Activated CD4-positive, alpha-beta T cell treated with anti-CD3 and anti-CD28 coated beads, Interleukin-2, amount 10 ng/mL, durations not matched to agents 7 days and 5 days (primary cell): ENCODE measurements at regions of chr13 and their contacts with region 1.

Region 1: DNA sequence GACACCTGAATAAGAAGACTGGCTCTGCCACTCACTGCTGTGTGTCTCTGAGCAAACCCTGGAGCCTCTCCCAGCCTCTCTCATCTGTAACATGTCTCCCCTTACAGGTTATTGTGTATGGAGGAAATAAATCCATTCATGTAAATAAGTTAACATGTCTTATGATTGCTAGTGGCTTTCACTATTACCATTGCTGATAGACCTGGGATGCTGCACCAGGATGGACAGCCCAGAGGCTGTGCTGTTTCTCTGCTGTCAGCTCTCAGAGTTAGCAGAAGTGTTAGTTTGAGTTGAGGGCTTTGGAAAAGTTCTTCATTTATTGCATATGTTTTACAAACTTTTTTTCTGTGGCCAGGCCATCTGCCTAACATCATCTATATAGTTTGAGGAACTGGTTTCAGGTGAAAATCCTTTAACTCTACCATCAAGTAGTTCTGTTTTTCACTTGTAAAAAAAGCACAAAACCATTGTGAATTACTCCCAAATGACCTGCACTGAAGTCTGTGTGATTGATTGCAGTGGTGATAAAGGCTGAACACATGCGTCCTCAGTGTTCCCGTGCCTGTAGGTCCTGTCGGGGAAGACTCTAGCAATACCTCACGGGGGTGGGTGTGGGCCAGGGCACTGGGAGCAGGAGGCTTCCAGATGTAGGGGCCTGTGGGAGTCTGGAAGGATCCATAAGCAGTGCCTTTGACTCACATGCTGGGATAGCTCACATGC is 24.6 kb downstream of the MPHOSPH8 start:
- DNase-seq: no peak
- H3K4me3 Mint-ChIP-seq: no peak overlapping the region
- H3K27ac Mint-ChIP-seq: no peak overlapping the region
- H3K4me1 Mint-ChIP-seq: no peaks in the 10 kb centered on the region
- H3K27me3 Mint-ChIP-seq: no peaks in the 10 kb centered on the region

Region 2: DNA sequence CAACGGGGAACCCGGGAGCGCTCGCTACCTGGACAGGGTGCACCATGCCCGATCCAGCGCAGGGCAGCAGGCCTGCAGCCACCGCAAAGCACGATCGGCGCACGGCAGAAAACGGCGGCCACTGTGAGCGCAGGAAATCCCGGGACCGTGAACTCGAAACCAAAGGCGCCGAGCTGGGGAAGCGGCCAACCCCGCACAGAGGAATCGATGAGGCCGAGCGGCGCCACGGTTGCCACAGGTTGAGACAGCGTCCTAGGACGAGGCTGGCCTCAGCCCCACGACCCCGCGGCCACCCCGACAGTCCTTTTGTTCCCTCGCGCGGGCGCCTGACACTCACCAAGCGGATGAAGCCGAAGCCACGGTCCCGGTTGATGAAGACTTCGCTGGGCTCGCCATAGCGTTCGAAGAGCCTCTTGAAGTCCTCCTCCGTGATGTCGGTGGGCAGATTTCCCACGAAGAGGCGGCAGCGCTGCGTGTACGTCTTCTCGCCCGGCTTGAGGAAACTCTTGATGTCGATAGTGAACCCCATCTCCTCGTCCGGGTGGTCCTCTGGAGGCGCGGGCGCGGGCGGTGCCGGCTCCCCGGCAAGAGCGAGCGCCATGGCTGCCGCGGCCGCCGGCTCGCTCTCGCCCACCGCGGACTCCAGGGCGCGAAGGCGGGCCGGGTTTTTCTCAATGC is 124.2 kb after region 1 on chr13:
- CTCF ChIA-PET with region 1: no interaction called
- POLR2A ChIA-PET with region 1: interaction called, 13 read pairs
- DNase-seq: peak; percentile 63
- H3K4me3 Mint-ChIP-seq: peak overlapping the region; percentile 98
- H3K27ac Mint-ChIP-seq: peak overlapping the region; percentile 100
- H3K4me1 Mint-ChIP-seq: peaks cover 15% of the 10 kb centered on the region
- H3K27me3 Mint-ChIP-seq: no peaks in the 10 kb centered on the region